ENCODE measurements at regions of chr2 and their contacts with region 1.

Region 1: DNA sequence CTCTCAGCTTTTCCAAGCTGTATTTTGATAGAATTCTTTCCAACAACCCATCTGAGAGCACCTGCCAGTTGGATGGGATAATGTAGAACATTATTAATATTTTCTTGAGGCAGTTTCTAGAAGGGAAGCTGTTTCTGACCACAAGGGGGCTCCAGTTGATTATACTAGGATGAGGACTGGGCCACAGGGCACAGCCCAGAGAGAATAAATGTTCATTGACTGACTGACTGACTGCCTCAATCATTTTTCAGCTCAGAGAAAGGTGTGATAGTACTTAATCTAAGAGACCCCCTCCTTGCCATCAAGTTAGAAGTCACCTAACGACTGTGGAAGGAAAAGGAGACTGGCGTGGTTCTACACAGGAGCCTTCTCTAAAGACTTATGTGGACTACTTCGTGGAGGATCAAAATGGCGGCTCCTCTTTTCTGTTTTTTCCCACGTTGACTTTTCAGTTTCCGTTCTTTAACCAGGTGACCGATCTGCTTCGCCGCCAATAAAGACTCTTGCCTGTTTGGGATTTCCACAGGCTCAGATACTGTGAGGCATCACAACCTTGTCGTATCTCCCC is 31.9 kb upstream of the CREG2 start:
- DNase-seq: peak in 3 of 5 donors; percentile 41 to 60 (median 49)
- H3K4me3 ChIP-seq: no peak overlapping the region
- H3K27ac ChIP-seq: no peak overlapping the region
- H3K4me1 ChIP-seq: no peaks in the 10 kb centered on the region
- H3K27me3 ChIP-seq: no peaks in the 10 kb centered on the region
- CTCF ChIP-seq: peak; percentile 53 to 64 (median 57)
- EP300 ChIP-seq: no peak
- POLR2A ChIP-seq: no peak

Region 2: GRCh38 chr2:101473911-101474701 is 54.9 kb after region 1 on chr2:
- intact Hi-C with region 1: no loop called
- DNase-seq: peak; percentile 62 to 79 (median 68)
- H3K4me3 ChIP-seq: peak overlapping the region; percentile 33
- H3K27ac ChIP-seq: peak overlapping the region; percentile 9 to 87
- H3K4me1 ChIP-seq: peaks cover 1% of the 10 kb centered on the region
- H3K27me3 ChIP-seq: no peaks in the 10 kb centered on the region
- CTCF ChIP-seq: no peak
- EP300 ChIP-seq: no peak
- POLR2A ChIP-seq: no peak

Region 3: DNA sequence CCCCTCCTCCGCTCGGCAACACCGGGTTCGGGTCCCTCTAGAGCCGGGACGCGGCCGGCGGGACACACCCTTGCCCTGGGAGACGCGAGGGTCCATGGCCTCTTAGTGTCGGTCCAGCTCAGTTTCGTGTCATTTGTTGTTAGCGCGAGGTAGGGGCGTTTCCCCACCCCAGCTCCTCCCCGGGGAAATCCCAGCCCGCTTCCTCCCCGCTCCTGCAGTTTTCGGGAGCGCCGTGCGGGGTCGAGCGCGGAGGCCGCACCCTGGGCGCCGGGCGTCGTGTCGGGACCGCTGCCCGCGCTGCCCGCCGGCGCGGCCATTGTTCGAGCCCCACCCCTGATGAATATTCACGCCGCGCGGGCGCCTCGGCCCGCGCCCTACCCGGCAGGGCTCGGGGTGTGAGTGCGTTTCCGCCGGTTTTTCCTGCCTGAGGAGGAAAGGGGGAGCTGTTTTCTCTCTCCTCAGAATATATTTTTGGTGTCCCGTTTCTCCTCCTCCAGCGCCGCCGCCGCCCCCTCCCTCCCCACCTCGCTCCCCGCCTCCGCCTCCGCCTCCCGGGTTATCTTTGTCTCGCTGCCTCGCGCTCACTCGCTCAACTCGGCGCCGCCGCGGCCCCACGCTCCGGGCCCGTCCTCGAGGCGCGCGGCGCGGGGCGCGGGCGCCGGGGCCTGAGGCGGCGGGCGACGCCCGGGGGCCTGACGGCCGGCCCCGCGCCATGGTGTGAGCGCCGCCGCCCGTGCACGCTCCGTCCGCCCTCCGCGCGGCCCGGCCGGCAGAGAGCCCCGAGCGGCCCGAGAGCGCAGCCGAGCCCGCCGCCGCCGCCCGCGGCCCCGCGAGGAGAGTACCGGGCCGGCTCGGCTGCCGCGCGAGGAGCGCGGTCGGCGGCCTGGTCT is 278.2 kb after region 1 on chr2 and contains the start of gene MAP4K4:
- intact Hi-C with region 1: loop called in 1 of 4 experiments (anchors 5 kb)
- DNase-seq: peak; percentile 83 to 88 (median 86)
- H3K4me3 ChIP-seq: peak within 1 kb of the TSS; percentile 78
- H3K27ac ChIP-seq: peak within 1 kb of the TSS; percentile 65 to 94
- H3K4me1 ChIP-seq: peaks cover 11% of the 10 kb centered on the region
- H3K27me3 ChIP-seq: no peaks in the 10 kb centered on the region
- CTCF ChIP-seq: peak in 2 of 3 donors; percentile 23 to 36
- EP300 ChIP-seq: no peak
- POLR2A ChIP-seq: peak; percentile 46
- total RNA-seq, gene MAP4K4: 38.4 to 60.9 (median 49.7) TPM

Region 4: DNA sequence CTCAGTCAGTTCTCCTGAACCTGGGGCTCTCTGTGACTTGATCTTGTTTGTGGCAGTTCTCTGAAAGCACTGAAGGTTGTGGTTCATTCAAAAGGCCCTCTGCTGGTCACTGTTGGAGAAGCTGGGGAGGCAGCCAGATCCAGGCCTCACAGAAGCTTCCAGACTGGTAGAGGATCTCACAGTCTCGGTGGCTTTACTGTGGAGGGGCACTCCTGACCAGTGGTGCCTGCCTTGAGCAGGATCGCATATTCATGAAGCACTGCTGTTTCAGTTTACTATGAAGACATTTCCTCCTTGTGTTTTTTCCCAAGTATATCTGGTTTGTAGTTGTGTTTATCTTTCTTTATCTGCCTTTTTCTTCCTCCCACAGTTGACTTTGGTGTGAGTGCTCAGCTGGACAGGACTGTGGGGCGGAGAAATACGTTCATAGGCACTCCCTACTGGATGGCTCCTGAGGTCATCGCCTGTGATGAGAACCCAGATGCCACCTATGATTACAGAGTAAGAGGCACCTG is 412.2 kb after region 1 on chr2:
- intact Hi-C with region 1: loop called (anchors 5 to 10 kb)
- DNase-seq: peak; percentile 63 to 81 (median 69)
- H3K4me3 ChIP-seq: no peak overlapping the region
- H3K27ac ChIP-seq: peak overlapping the region in 1 of 2 donors; percentile 34
- H3K4me1 ChIP-seq: peaks cover 14% of the 10 kb centered on the region
- H3K27me3 ChIP-seq: no peaks in the 10 kb centered on the region
- CTCF ChIP-seq: peak; percentile 43 to 76 (median 61)
- EP300 ChIP-seq: no peak
- POLR2A ChIP-seq: no peak

Region 5: DNA sequence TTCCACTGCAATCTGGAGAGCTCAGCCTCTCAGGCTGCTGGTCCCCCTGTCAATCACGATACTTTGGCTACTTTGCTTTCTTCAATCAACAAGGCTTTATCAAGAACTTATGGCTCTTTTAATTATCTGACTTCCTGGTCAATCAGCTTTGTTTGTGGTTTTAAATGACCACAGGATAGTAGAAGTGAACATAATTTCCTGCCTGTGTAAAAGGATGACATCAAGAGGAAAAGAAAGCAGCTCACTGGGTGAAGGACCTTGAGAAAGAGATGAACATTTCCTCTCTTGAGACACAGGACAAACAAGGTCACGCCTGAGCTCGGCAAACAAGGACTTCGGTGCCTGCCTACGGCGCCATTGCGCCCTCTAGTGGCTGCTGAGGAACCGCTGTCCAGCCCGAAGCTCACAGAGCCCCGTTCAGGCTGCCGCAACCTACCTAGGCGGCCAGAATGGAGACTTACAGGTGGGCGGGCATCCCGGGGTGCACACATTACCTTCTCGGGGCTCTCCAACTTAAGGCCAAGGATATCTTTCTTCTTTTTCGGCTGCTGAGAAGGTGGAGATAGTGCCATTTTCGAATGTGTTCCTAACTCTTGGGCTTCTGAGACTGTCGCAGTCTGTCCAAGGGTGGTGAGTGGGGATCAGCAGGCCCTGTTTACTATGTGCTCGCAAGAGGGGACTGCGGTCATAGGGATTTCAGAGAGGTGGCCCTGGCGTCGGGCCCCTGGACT is 821.6 kb after region 1 on chr2:
- intact Hi-C with region 1: loop called in 1 of 4 experiments (anchors 10 kb)
- DNase-seq: peak; percentile 88 to 94 (median 93)
- H3K4me3 ChIP-seq: no peak overlapping the region
- H3K27ac ChIP-seq: peak overlapping the region in 1 of 2 donors; percentile 25
- H3K4me1 ChIP-seq: peaks cover 2% of the 10 kb centered on the region
- H3K27me3 ChIP-seq: no peaks in the 10 kb centered on the region
- CTCF ChIP-seq: peak; percentile 95 to 99 (median 97)
- EP300 ChIP-seq: no peak
- POLR2A ChIP-seq: no peak